Natural killer cell (primary cell): ENCODE measurements at regions of chr7 and their contacts with region 1.

Region 1: GRCh38 chr7:25894902-25895791 is 256.9 kb upstream of the NFE2L3 start:
- DNase-seq: peak; percentile 57 to 70
- ATAC-seq: peak; percentile 56 to 74 (median 70)
- H3K4me3 ChIP-seq: no peak overlapping the region
- H3K4me3 Mint-ChIP-seq: peak overlapping the region; percentile 77
- H3K27ac ChIP-seq: no peak overlapping the region
- H3K27ac Mint-ChIP-seq: peak overlapping the region in 1 of 2 donors; percentile 56
- H3K4me1 ChIP-seq: peaks cover 10% of the 10 kb centered on the region
- H3K4me1 Mint-ChIP-seq: peaks cover 16 to 28% of the 10 kb centered on the region in 2 donors
- H3K27me3 ChIP-seq: peaks cover 6% of the 10 kb centered on the region
- H3K27me3 Mint-ChIP-seq: peaks cover 31 to 41% of the 10 kb centered on the region in 2 donors
- CTCF ChIP-seq: peak; percentile 68

Region 2: GRCh38 chr7:26061688-26062150 is 166.6 kb after region 1 on chr7:
- intact Hi-C with region 1: loop called (anchors 1 kb)
- DNase-seq: peak; percentile 54 to 83
- ATAC-seq: peak; percentile 68 to 83 (median 80)
- H3K4me3 ChIP-seq: no peak overlapping the region
- H3K4me3 Mint-ChIP-seq: no peak overlapping the region
- H3K27ac ChIP-seq: no peak overlapping the region
- H3K27ac Mint-ChIP-seq: no peak overlapping the region
- H3K4me1 ChIP-seq: no peaks in the 10 kb centered on the region
- H3K4me1 Mint-ChIP-seq: peaks cover 0 to 5% of the 10 kb centered on the region in 2 donors
- H3K27me3 ChIP-seq: no peaks in the 10 kb centered on the region
- H3K27me3 Mint-ChIP-seq: peaks cover 26 to 52% of the 10 kb centered on the region in 2 donors
- CTCF ChIP-seq: peak; percentile 92

Region 3: GRCh38 chr7:26490650-26491624 is 595.8 kb after region 1 on chr7:
- intact Hi-C with region 1: loop called (anchors 10 kb)
- DNase-seq: no peak
- ATAC-seq: no peak
- H3K4me3 ChIP-seq: no peak overlapping the region
- H3K4me3 Mint-ChIP-seq: no peak overlapping the region
- H3K27ac ChIP-seq: no peak overlapping the region
- H3K27ac Mint-ChIP-seq: no peak overlapping the region
- H3K4me1 ChIP-seq: no peaks in the 10 kb centered on the region
- H3K4me1 Mint-ChIP-seq: no peaks in the 10 kb centered on the region
- H3K27me3 ChIP-seq: no peaks in the 10 kb centered on the region
- H3K27me3 Mint-ChIP-seq: peaks cover 2 to 9% of the 10 kb centered on the region in 2 donors
- CTCF ChIP-seq: no peak

Region 4: GRCh38 chr7:26686448-26686981 is 791.4 kb after region 1 on chr7:
- intact Hi-C with region 1: loop called (anchors 5 kb)
- DNase-seq: peak in 1 of 2 donors; percentile 68
- ATAC-seq: peak in 2 of 3 donors; percentile 42 to 52
- H3K4me3 ChIP-seq: no peak overlapping the region
- H3K4me3 Mint-ChIP-seq: no peak overlapping the region
- H3K27ac ChIP-seq: no peak overlapping the region
- H3K27ac Mint-ChIP-seq: no peak overlapping the region
- H3K4me1 ChIP-seq: no peaks in the 10 kb centered on the region
- H3K4me1 Mint-ChIP-seq: peaks cover 0 to 6% of the 10 kb centered on the region in 2 donors
- H3K27me3 ChIP-seq: no peaks in the 10 kb centered on the region
- H3K27me3 Mint-ChIP-seq: no peaks in the 10 kb centered on the region
- CTCF ChIP-seq: peak; percentile 80